ENCODE measurements at regions of chr3 and their contacts with region 1.

Region 1: GRCh38 chr3:139343895-139344856 is at the start of gene MRPS22:
- DNase-seq: peak; percentile 91
- ATAC-seq: peak; percentile 97
- H3K4me3 Mint-ChIP-seq: no peak within 1 kb of the TSS
- H3K27ac Mint-ChIP-seq: peak within 1 kb of the TSS; percentile 58
- H3K4me1 Mint-ChIP-seq: peaks cover 11% of the 10 kb centered on the region
- H3K27me3 Mint-ChIP-seq: no peaks in the 10 kb centered on the region
- total RNA-seq, gene MRPS22: 39.7 to 41.1 TPM

Region 2: GRCh38 chr3:139281522-139282196 is 62.5 kb before region 1 on chr3:
- CTCF ChIA-PET with region 1: no interaction called
- POLR2A ChIA-PET with region 1: no interaction called
- DNase-seq: no peak
- ATAC-seq: no peak
- H3K4me3 Mint-ChIP-seq: no peak overlapping the region
- H3K27ac Mint-ChIP-seq: no peak overlapping the region
- H3K4me1 Mint-ChIP-seq: peaks cover 7% of the 10 kb centered on the region
- H3K27me3 Mint-ChIP-seq: peaks cover 4% of the 10 kb centered on the region

Region 3: DNA sequence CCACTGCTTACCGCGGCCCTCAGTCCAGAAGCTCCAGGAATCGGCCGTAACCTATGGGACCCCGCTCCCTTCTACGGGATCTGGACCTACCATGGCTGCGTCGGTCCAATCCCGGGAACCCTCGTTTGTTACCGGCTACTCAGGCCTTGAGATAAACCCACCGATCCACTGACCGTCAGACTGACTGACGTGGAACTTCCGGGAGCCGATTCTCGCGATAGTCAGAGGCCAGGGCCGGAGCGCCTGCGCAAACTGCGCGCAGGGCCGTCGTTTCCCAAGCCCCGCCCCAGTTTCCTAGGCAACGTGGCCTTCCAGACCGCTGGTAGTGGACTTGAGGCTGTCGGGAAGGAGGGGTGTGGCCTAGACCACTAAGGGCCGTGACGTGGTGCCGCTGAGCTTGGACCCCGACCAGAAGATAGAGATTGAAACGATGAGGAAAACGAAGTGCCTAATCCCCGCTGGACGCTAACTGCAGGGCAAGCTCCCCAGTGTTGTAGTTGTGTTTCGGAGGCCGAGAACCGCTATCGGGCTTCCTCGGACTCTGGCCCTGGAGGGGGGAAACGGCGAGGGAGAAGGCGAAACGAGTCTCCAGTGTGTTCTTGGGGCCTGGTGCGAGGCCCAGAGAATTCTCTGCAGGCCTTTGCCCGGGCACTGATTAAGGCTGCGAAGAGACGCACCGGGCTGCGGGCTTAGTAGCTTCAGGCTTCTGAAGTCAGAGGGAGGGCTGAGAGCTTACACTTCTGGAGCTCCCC is 45.5 kb after region 1 on chr3 and contains the start of gene COPB2:
- CTCF ChIA-PET with region 1: no interaction called
- POLR2A ChIA-PET with region 1: interaction called, 14 read pairs
- DNase-seq: peak; percentile 97
- ATAC-seq: peak; percentile 94
- H3K4me3 Mint-ChIP-seq: peak within 1 kb of the TSS; percentile 90
- H3K27ac Mint-ChIP-seq: peak within 1 kb of the TSS; percentile 93
- H3K4me1 Mint-ChIP-seq: peaks cover 40% of the 10 kb centered on the region
- H3K27me3 Mint-ChIP-seq: no peaks in the 10 kb centered on the region
- total RNA-seq, gene COPB2: 82.0 to 87.6 TPM

Measured in activated CD8-positive, alpha-beta T cell treated with anti-CD3 and anti-CD28 coated beads, Interleukin-2, amount 10 ng/mL, durations not matched to agents 7 days and 5 days (primary cell).